ENCODE measurements at regions of chr11 and their contacts with region 1.

Region 1: GRCh38 chr11:66282468-66283386 is 4.8 kb downstream of the CNIH2 start:
- DNase-seq: peak; percentile 59
- H3K4me3 ChIP-seq: no peak overlapping the region
- H3K27me3 ChIP-seq: no peaks in the 10 kb centered on the region
- CTCF ChIP-seq: peak; percentile 97

Region 2: DNA sequence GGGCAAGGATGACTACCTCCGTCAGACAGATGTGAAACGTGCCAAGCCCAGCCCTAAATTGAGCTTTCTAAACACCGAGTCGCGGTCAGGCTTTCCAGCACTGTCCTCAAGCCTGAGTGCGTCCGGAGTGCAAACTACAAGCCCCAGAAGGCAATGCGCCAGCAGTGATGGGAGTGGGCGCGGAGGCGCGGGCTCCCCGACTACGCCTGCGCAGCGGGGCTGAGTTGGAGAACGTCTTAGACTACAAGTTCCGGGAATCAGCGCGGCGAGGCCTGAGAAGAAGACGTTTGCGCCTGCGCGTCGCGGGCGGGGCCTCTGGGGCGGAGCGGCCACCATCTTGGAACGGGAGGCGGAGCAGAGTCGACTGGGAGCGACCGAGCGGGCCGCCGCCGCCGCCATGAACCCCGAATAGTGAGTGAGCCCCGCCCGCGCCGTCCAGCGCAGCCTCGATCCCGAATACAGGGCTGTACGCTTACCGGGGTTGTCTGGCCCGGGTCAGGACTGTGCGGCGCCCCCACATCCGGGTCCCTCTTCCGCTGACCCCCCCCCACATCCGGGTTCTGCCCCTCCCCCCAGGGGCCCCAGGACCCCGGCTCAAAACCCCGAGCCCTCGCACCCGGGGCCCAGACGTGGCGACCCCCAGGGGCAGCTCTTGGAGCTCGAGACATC is 14.3 kb before region 1 on chr11 and contains the start of gene RAB1B:
- CTCF ChIA-PET with region 1: interaction called, 60 read pairs
- POLR2A ChIA-PET with region 1: no interaction called
- DNase-seq: peak; percentile 94
- H3K4me3 ChIP-seq: peak within 1 kb of the TSS; percentile 92
- H3K27me3 ChIP-seq: no peaks in the 10 kb centered on the region
- CTCF ChIP-seq: no peak
- polyA plus RNA-seq, gene RAB1B: 170 and 251 TPM in 2 replicates

Region 3: GRCh38 chr11:66336234-66337102 is 53.7 kb after region 1 on chr11 and contains the start of gene RIN1:
- CTCF ChIA-PET with region 1: interaction called, 10 read pairs
- POLR2A ChIA-PET with region 1: no interaction called
- DNase-seq: peak; percentile 93
- H3K4me3 ChIP-seq: peak within 1 kb of the TSS; percentile 78
- H3K27me3 ChIP-seq: no peaks in the 10 kb centered on the region
- CTCF ChIP-seq: peak; percentile 39
- polyA plus RNA-seq, gene RIN1: 6.3 and 9.2 TPM in 2 replicates

Region 4: DNA sequence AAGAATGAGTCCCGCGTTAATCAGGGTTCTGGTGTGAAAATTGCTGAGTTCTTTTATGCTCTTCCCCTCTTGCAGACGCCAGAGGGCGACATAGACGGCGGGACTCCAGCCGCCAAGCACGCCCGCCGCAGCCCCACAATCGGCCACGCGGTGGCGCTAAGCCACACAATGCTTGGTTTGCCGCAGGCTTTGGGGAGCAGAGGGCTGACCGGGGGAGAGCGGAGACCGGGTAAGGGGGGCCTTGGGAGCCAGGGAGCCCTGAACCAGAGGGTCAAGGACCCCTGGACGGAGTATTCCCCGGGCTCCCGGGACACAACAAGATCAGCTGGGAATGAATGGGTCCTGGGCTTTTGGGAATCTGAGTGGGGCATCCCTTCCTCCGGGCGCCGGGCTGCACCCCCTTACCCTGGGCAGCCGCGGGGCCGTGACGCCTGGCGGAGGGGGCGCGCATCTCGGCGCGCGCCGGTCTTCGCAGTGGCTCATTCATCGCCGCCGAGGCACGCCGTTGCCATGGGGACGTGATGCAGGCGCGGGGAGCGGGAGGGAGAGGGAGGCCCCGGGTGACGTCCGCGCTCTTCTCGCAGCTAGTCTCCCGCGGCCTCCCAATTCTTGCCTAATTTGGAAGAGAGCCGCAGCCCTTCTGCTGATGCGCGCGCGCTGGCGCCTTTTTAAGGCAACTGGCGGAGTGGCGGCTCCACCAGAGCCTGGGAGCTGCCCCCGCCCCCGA is 125.9 kb after region 1 on chr11:
- CTCF ChIA-PET with region 1: no interaction called
- POLR2A ChIA-PET with region 1: no interaction called
- DNase-seq: peak; percentile 63
- H3K4me3 ChIP-seq: peak overlapping the region; percentile 54
- H3K27me3 ChIP-seq: peaks cover 13% of the 10 kb centered on the region
- CTCF ChIP-seq: peak; percentile 99

Measured in BJ (cell line).